ENCODE measurements at regions of chr12 and their contacts with region 1.

Region 1: GRCh38 chr12:17866802-17867201 is 223.2 kb downstream of the RERGL start:
- DNase-seq: no peak
- H3K4me3 ChIP-seq: no peak overlapping the region
- H3K4me3 Mint-ChIP-seq: no peak overlapping the region
- H3K27ac Mint-ChIP-seq: no peak overlapping the region
- H3K4me1 ChIP-seq: no peaks in the 10 kb centered on the region
- H3K4me1 Mint-ChIP-seq: no peaks in the 10 kb centered on the region
- H3K27me3 ChIP-seq: no peaks in the 10 kb centered on the region
- H3K27me3 Mint-ChIP-seq: peaks cover 10% of the 10 kb centered on the region
- CTCF ChIP-seq: no peak

Region 2: GRCh38 chr12:17577405-17577804 is 289.4 kb before region 1 on chr12:
- CTCF ChIA-PET with region 1: no interaction called
- POLR2A ChIA-PET with region 1: no interaction called
- intact Hi-C with region 1: no loop called
- DNase-seq: no peak
- H3K4me3 ChIP-seq: no peak overlapping the region
- H3K4me3 Mint-ChIP-seq: no peak overlapping the region
- H3K27ac Mint-ChIP-seq: no peak overlapping the region
- H3K4me1 ChIP-seq: no peaks in the 10 kb centered on the region
- H3K4me1 Mint-ChIP-seq: no peaks in the 10 kb centered on the region
- H3K27me3 ChIP-seq: no peaks in the 10 kb centered on the region
- H3K27me3 Mint-ChIP-seq: no peaks in the 10 kb centered on the region
- CTCF ChIP-seq: no peak

Region 3: DNA sequence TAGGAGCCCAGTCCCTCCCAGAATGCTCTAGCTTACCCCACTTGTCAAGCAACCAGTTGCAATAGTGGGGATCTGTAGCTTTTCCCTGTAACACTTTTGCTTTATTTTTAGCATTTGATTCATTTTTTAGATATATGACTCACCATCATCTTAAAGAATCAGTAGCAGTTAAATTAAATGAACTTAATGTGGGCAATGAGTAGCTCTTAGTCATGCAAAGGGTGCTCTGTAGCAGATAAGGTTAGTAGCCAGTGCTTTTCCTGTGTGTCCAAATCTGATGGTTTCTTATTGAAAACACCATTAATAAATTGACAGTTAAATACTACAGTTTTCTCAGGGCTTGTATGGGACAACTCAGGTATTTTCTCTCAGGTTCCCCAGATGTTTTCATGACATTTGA is 88.6 kb before region 1 on chr12:
- CTCF ChIA-PET with region 1: no interaction called
- POLR2A ChIA-PET with region 1: no interaction called
- intact Hi-C with region 1: loop called (anchors 5 kb)
- DNase-seq: no peak
- H3K4me3 ChIP-seq: no peak overlapping the region
- H3K4me3 Mint-ChIP-seq: no peak overlapping the region
- H3K27ac Mint-ChIP-seq: no peak overlapping the region
- H3K4me1 ChIP-seq: no peaks in the 10 kb centered on the region
- H3K4me1 Mint-ChIP-seq: no peaks in the 10 kb centered on the region
- H3K27me3 ChIP-seq: no peaks in the 10 kb centered on the region
- H3K27me3 Mint-ChIP-seq: peaks cover 4% of the 10 kb centered on the region
- CTCF ChIP-seq: no peak